ENCODE measurements at regions of chr3 and their contacts with region 1.

Region 1: DNA sequence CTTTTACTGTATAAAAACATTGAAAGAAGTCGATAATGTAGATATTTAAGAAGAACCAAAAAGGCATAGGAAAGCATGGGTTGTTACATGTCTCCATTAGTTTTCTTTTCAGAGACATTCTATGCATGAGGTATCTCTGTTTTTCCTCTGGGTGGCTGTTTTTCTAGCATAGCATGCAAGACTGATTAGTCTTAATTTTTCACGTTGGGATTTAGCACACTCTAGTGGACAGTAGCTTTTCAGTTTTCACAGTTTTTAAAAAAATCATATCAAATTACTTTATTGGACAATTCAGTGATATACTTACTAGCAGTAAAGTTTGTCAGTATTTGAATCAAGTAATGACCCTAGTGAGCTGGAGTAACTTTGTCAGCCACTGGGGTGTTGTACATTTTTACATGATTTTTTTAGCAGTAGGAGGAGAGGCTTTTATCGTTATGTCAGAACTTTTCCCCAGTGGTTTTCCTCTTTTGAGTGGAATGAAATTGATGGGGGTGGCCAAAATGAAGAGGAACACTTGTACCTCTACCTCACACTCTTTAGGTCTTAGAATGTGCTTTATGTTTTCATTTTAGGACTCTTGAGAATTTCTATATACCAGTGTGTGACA is 57.2 kb downstream of the SEC22A start:
- DNase-seq: no peak
- H3K4me3 ChIP-seq: no peak overlapping the region
- H3K27ac ChIP-seq: no peak overlapping the region
- H3K4me1 ChIP-seq: no peaks in the 10 kb centered on the region
- H3K27me3 ChIP-seq: no peaks in the 10 kb centered on the region
- CTCF ChIP-seq: peak; percentile 71 to 76

Region 2: DNA sequence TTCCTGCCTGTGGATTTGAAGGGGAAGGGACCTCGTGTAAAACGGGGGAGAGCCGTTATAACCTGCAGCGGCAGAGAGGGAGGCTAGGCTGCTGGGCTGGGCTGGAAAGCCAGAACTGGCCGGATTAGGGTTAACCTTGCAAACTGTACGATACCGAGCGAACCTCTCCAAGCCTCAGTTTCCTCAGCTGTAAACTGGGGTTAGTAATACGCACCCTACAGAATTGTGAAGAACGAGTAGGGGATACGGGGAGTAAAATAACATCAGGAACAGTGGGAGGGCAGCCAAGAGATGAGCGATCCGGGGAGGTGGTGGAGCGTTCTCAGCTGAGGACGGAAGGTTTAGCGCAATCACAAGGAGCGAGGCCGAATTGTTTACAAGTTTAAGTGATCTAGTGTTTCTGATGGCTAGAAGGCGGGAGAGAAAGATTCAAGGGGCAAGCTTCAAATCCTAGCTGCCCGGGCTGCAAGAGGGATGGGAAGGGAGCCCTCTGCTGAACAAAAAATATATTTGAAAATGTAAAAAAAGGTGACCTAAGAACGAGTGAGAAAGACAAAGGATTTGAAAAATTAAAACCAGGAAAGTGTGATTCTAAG is 230.6 kb before region 1 on chr3:
- intact Hi-C with region 1: loop called (anchors 5 kb)
- DNase-seq: peak in 1 of 2 donors; percentile 51
- H3K4me3 ChIP-seq: peak overlapping the region; percentile 51 to 64
- H3K27ac ChIP-seq: peak overlapping the region in 1 of 2 donors; percentile 4
- H3K4me1 ChIP-seq: peaks cover 0 to 28% (median 26%) of the 10 kb centered on the region in 4 donors
- H3K27me3 ChIP-seq: peaks cover 0 to 44% of the 10 kb centered on the region in 2 donors
- CTCF ChIP-seq: peak; percentile 56 to 63

Region 3: GRCh38 chr3:123375014-123375940 is 116.4 kb after region 1 on chr3:
- intact Hi-C with region 1: no loop called
- DNase-seq: peak in 1 of 2 donors; percentile 59
- H3K4me3 ChIP-seq: no peak overlapping the region
- H3K27ac ChIP-seq: peak overlapping the region; percentile 70 to 96
- H3K4me1 ChIP-seq: peaks cover 0 to 100% (median 74%) of the 10 kb centered on the region in 4 donors
- H3K27me3 ChIP-seq: no peaks in the 10 kb centered on the region
- CTCF ChIP-seq: no peak

Measured in tibial artery (tissue), 4 donors.